Upper lobe of right lung (tissue), 1 donor: ENCODE measurements at regions of chr18 and their contacts with region 1.

Region 1: DNA sequence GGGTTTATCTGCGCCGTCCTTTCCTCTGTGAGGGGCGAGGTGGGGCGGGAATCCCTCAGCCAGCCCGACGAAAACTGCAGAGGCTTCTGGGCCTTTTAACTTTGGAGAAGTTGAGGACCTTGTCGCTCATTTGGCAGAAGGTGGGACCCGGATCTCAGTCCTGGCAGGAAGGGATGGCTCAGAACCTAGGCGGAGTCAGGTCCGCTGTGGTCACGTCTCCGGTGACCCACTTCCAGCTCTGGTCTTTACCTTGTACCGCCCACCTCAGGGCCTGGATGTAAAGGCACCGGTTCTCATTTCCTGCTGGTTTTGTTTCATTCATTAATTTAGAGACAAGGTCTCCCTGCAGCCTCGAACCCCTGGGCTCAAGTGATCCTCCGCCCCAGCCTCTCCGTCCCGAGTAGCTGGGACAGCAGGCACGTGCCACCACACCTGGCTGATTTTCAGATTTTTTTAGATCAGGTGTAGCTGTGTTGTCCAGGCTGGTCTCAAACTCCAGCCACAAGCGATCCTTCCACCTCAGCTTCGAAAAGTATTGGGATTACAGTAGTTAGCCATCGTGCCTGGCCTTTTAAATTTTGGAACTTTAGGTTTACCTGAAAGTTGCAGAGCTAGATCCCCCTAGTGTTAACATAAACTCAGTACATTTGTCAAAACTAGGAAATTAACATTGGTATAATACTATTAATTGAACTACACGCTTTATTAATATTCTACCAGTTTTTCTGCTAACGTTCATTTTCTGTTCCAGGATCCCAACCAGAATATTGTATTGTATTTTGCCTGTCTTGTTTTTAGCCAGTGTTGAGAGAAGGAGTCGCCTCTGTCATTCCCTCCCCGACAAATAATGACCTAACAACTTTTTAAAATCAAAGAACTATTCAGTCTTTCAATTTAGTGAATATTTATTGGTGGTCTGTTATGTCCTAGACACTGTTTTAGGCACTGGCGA is 852 bp downstream of the POLI start:
- DNase-seq: no peak
- ATAC-seq: peak; percentile 69
- H3K4me3 ChIP-seq: peak overlapping the region; percentile 67
- H3K27ac ChIP-seq: peak overlapping the region; percentile 95
- H3K4me1 ChIP-seq: no peaks in the 10 kb centered on the region
- H3K27me3 ChIP-seq: no peaks in the 10 kb centered on the region
- CTCF ChIP-seq: peak; percentile 57

Region 2: DNA sequence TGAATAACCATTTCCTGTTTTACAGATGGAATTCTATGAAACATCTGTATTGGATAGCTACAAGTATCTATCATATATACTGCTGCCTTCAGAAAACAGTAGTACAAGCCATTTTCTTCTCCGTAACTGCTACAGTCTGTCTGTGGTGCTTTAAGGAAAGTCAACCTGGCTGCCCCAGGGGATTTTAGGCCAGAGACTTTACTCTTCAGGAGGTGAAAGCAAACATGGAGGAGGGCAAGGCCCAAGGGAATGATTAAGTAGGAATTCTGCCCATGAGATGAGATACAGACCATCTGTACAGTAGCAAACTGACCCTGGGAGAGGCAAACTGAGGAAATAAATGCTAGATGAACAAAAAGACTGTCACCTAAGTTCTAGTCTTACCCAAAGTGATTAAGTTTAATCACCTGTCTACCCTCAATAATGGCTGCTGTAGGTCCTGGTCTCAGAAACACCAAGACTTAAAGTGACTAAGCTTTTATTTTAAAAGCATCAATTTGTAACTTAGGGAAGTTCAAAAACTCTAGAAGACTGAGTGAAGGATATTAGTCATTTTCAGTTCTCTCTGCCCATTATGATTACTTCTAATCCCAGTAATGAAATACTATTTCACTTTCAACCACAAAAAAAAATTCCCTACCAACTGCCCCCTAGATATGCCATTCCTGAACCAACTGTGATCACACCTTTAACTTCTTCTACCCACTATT is 60.5 kb before region 1 on chr18:
- intact Hi-C with region 1: no loop called
- DNase-seq: no peak
- ATAC-seq: no peak
- H3K4me3 ChIP-seq: no peak overlapping the region
- H3K27ac ChIP-seq: no peak overlapping the region
- H3K4me1 ChIP-seq: peaks cover 23% of the 10 kb centered on the region
- H3K27me3 ChIP-seq: no peaks in the 10 kb centered on the region
- CTCF ChIP-seq: no peak

Region 3: GRCh38 chr18:54357660-54358494 is 87.7 kb after region 1 on chr18 and contains the starts of genes C18orf54 and STARD6:
- intact Hi-C with region 1: loop called (anchors 10 kb)
- DNase-seq: peak; percentile 92
- ATAC-seq: peak; percentile 99
- H3K4me3 ChIP-seq: peak within 1 kb of the TSS; percentile 77
- H3K27ac ChIP-seq: peak within 1 kb of the TSS; percentile 26
- H3K4me1 ChIP-seq: no peaks in the 10 kb centered on the region
- H3K27me3 ChIP-seq: no peaks in the 10 kb centered on the region
- CTCF ChIP-seq: peak; percentile 31
- total RNA-seq, gene C18orf54: 3.0 TPM
- total RNA-seq, gene STARD6: not detected